PC-9 (cell line): ENCODE measurements at regions of chr4 and their contacts with region 1.

Region 1: GRCh38 chr4:165476214-165477098 is 97.6 kb downstream of the CPE start:
- DNase-seq: peak; percentile 71 to 83
- H3K4me3 ChIP-seq: no peak overlapping the region
- H3K27ac ChIP-seq: peak overlapping the region; percentile 53
- H3K4me1 ChIP-seq: peaks cover 17% of the 10 kb centered on the region
- H3K27me3 ChIP-seq: no peaks in the 10 kb centered on the region
- CTCF ChIP-seq: no peak

Region 2: GRCh38 chr4:165151734-165152133 is 324.7 kb before region 1 on chr4:
- CTCF ChIA-PET with region 1: no interaction called
- POLR2A ChIA-PET with region 1: interaction called, 12 read pairs
- intact Hi-C with region 1: no loop called
- DNase-seq: no peak
- H3K4me3 ChIP-seq: no peak overlapping the region
- H3K27ac ChIP-seq: no peak overlapping the region
- H3K4me1 ChIP-seq: no peaks in the 10 kb centered on the region
- H3K27me3 ChIP-seq: no peaks in the 10 kb centered on the region
- CTCF ChIP-seq: no peak